ENCODE measurements at regions of chr6 and their contacts with region 1.

Region 1: GRCh38 chr6:99501762-99502161 is 13.5 kb downstream of the USP45 start:
- DNase-seq: no peak
- ATAC-seq: no peak
- H3K4me3 ChIP-seq: no peak overlapping the region
- H3K27ac ChIP-seq: no peak overlapping the region
- H3K4me1 ChIP-seq: no peaks in the 10 kb centered on the region
- H3K27me3 ChIP-seq: no peaks in the 10 kb centered on the region
- CTCF ChIP-seq: no peak

Region 2: DNA sequence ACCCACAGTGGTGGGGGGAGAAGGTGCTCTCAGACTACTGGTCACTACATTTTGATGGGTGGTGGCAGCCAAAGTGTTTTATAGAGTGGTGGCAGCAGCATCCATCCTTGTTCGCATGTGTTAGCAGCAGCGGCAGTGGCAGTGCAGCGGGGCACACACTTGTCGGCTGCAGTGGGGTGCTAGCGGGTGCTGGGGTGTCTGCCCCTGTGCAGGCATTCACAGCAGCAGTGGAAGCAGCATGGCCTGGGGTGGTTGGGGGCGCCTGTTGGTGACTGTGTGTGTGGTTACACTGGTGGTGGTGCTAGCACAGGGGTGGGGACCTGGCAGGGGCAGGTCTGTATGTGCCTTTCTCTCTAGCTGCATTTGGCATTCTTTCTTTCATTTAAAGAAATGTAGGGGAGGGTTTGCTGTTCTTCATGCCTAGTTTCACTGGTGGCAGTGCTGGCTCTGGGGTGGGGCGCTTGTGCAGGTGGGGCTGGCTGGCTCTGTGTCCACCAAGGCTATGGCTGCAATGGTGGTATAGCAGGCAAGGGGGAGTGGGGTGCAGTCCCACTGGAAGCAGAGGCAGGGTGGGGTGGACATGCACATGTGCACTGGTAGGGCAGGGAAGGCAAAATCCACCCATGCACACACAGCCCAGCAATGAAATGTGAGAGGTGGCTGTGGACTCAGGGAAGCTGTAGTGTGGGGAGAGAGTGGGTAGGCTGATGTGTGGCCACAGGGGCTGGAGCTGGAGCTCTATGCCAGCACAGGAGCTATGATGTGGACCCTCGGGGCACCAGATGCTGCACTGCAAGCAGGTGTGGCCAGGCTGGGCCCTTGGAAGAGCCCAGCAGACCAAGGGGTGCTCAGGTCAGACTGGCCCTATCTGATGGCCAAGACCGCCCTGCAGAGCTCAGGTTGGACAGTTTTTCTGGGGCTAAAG is 278.1 kb after region 1 on chr6:
- CTCF ChIA-PET with region 1: no interaction called
- POLR2A ChIA-PET with region 1: interaction called, 13 read pairs
- in situ Hi-C with region 1: no loop called
- intact Hi-C with region 1: no loop called
- DNase-seq: no peak
- ATAC-seq: no peak; the same call in 1 of the 2 replicates
- H3K4me3 ChIP-seq: no peak overlapping the region
- H3K27ac ChIP-seq: no peak overlapping the region
- H3K4me1 ChIP-seq: no peaks in the 10 kb centered on the region
- H3K27me3 ChIP-seq: peaks cover 3% of the 10 kb centered on the region; the same call in 1 of the 2 replicates
- CTCF ChIP-seq: no peak

Measured in Panc1 (cell line).